Mammary epithelial cell (primary cell): ENCODE measurements at regions of chr5 and their contacts with region 1.

Region 1: DNA sequence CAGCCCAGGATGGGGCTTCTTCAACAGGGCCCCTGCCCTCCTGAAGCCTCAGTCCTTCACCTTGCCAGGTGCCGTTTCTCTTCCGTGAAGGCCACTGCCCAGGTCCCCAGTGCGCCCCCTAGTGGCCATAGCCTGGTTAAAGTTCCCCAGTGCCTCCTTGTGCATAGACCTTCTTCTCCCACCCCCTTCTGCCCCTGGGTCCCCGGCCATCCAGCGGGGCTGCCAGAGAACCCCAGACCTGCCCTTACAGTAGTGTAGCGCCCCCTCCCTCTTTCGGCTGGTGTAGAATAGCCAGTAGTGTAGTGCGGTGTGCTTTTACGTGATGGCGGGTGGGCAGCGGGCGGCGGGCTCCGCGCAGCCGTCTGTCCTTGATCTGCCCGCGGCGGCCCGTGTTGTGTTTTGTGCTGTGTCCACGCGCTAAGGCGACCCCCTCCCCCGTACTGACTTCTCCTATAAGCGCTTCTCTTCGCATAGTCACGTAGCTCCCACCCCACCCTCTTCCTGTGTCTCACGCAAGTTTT is 23.6 kb downstream of the PCDHGC5 start:
- DNase-seq: peak; percentile 50
- H3K4me3 ChIP-seq: peak overlapping the region in 1 of 3 experiments; percentile 32
- H3K27ac ChIP-seq: peak overlapping the region; percentile 82
- H3K4me1 ChIP-seq: peaks cover 66% of the 10 kb centered on the region
- H3K27me3 ChIP-seq: no peaks in the 10 kb centered on the region
- CTCF ChIP-seq: peak; percentile 78 to 90

Region 2: DNA sequence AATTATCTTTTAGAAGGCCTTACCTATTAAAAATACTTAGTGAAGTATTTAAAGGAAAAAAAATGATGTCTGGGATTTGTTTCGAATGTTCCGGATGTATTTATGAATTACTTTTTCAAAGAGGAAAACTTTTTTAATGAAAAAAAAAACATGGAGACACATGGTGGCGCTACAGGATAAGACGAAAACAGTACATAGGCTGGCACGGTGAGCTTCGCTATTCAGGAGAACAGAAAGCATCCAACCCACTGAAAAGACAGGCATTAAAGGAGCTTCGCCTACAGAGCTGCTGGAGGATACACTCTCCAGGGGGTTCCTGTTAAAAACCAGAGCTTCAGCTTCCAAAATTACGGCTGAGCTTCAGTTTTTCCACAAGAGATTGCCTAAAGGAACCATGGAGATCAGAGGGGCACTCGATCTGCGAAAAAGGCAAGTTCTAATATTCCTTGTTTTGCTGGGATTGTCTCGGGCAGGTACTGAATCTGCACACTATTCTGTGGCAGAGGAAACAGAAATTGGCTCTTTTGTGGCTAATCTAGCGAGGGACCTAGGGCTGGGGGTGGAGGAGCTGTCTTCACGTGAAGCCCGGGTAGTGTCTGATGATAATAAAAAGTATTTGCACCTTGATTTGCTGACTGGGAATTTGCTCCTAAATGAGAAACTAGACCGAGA is 289.2 kb before region 1 on chr5 and contains the start of gene PCDHB14:
- CTCF ChIA-PET with region 1: no interaction called
- dilution Hi-C with region 1: no loop called
- in situ Hi-C with region 1: no loop called
- intact Hi-C with region 1: loop called (anchors 1 kb)
- DNase-seq: peak; percentile 65
- H3K4me3 ChIP-seq: peak within 1 kb of the TSS in 2 of 3 experiments; percentile 17 to 32
- H3K27ac ChIP-seq: no peak within 1 kb of the TSS
- H3K4me1 ChIP-seq: no peaks in the 10 kb centered on the region
- H3K27me3 ChIP-seq: no peaks in the 10 kb centered on the region
- CTCF ChIP-seq: peak in 1 of 2 donors; percentile 38
- total RNA-seq, gene PCDHB14: 1.4 to 1.7 TPM

Region 3: DNA sequence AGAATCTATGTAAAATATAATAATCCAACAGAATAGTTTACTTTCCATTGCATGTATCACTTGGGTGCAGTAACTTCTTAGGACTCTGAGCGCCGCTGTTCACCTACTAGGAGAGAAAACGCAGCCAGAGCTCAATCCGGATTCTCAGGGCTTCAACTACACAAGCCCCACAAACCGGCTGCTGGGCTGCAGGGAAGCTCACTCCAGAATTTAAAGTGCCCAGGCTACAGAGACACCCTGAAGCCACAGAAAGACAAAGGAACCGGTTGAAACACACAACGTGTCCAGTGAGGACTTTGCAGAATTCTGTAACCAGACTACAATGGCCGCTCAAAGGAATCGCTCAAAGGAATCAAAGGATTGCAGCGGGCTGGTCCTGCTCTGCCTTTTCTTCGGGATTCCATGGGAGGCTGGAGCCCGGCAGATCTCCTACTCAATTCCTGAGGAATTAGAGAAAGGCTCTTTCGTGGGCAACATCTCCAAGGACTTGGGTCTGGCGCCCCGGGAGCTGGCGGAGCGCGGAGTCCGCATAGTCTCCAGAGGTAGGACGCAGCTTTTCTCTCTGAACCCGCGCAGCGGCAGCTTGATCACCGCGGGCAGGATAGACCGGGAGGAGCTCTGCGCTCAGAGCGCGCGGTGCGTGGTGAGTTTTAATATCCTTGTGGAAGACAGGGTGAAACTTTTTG is 99.5 kb before region 1 on chr5 and contains the start of gene PCDHGA10:
- CTCF ChIA-PET with region 1: no interaction called
- dilution Hi-C with region 1: no loop called
- in situ Hi-C with region 1: no loop called
- intact Hi-C with region 1: loop called (anchors 1 kb)
- DNase-seq: peak; percentile 34
- H3K4me3 ChIP-seq: no peak within 1 kb of the TSS
- H3K27ac ChIP-seq: no peak within 1 kb of the TSS
- H3K4me1 ChIP-seq: no peaks in the 10 kb centered on the region
- H3K27me3 ChIP-seq: no peaks in the 10 kb centered on the region
- CTCF ChIP-seq: no peak
- total RNA-seq, gene PCDHGA10: 7.8 to 7.9 TPM

Region 4: DNA sequence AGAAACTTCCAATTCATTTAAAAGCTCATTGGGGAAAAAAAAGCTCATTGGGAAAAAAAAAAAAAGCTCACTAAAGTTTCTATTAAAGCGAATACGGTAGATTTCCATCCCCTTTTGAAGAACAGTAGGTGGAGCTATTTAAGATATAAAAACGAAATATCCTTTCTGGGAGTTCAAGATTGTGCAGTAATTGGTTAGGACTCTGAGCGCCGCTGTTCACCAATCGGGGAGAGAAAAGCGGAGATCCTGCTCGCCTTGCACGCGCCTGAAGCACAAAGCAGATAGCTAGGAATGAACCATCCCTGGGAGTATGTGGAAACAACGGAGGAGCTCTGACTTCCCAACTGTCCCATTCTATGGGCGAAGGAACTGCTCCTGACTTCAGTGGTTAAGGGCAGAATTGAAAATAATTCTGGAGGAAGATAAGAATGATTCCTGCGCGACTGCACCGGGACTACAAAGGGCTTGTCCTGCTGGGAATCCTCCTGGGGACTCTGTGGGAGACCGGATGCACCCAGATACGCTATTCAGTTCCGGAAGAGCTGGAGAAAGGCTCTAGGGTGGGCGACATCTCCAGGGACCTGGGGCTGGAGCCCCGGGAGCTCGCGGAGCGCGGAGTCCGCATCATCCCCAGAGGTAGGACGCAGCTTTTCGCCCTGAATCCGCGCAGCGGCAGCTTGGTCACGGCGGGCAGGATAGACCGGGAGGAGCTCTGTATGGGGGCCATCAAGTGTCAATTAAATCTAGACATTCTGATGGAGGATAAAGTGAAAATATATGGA is 81.9 kb before region 1 on chr5 and contains the start of gene PCDHGA12:
- CTCF ChIA-PET with region 1: no interaction called
- dilution Hi-C with region 1: loop called (anchors 5 kb)
- in situ Hi-C with region 1: no loop called
- intact Hi-C with region 1: no loop called
- DNase-seq: peak; percentile 82
- H3K4me3 ChIP-seq: peak within 1 kb of the TSS in 2 of 3 experiments; percentile 3 to 17
- H3K27ac ChIP-seq: no peak within 1 kb of the TSS
- H3K4me1 ChIP-seq: no peaks in the 10 kb centered on the region
- H3K27me3 ChIP-seq: no peaks in the 10 kb centered on the region
- CTCF ChIP-seq: peak; percentile 58 to 65
- total RNA-seq, gene PCDHGA12: 3.2 to 24.5 TPM

Region 5: GRCh38 chr5:141475625-141476131 is 36.8 kb before region 1 on chr5 and contains the start of gene PCDHGC3:
- CTCF ChIA-PET with region 1: interaction called, 8 read pairs
- dilution Hi-C with region 1: no loop called
- in situ Hi-C with region 1: no loop called
- intact Hi-C with region 1: loop called (anchors 1 kb)
- DNase-seq: peak; percentile 95
- H3K4me3 ChIP-seq: peak within 1 kb of the TSS; percentile 50 to 73 (median 72)
- H3K27ac ChIP-seq: peak within 1 kb of the TSS; percentile 79
- H3K4me1 ChIP-seq: peaks cover 25% of the 10 kb centered on the region
- H3K27me3 ChIP-seq: no peaks in the 10 kb centered on the region
- CTCF ChIP-seq: peak; percentile 14 to 46
- total RNA-seq, gene PCDHGC3: 74.7 to 76.3 TPM

Region 6: DNA sequence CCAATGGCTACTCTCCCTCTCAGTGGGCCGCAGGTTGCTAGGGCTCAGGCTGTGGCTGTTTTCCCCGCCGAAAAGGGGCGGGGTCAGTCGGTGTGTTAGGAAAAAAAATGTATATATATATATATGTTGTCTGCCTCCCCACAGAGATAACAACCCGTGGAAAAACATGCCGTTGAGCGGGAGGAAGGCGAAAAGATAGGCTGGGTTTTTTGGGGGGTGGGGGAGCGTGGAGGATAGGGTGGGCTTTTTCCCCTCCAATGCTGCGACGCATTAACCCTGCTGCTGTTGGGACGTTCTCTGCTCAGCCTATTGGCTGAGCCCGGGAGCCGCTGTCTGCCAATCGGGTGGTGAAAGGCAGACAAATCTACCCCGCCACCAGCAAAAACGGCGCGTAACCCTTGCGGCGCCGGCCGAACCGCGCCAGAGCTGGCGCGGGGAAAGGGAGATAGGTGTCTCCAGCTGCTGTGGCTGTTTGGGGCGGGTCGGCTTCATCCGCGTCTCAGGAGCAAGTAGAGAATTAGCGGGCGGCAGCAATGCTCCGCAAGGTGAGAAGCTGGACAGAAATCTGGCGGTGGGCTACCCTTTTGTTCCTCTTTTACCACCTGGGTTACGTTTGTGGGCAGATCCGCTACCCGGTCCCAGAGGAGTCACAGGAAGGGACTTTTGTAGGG is 27.7 kb before region 1 on chr5 and contains the start of gene PCDHGC4:
- CTCF ChIA-PET with region 1: no interaction called
- dilution Hi-C with region 1: no loop called
- in situ Hi-C with region 1: no loop called
- intact Hi-C with region 1: loop called (anchors 2 kb)
- DNase-seq: no peak
- H3K4me3 ChIP-seq: peak within 1 kb of the TSS in 1 of 3 experiments; percentile 4
- H3K27ac ChIP-seq: no peak within 1 kb of the TSS
- H3K4me1 ChIP-seq: peaks cover 37% of the 10 kb centered on the region
- H3K27me3 ChIP-seq: no peaks in the 10 kb centered on the region
- CTCF ChIP-seq: no peak
- total RNA-seq, gene PCDHGC4: 1.2 to 2.7 TPM

Region 7: DNA sequence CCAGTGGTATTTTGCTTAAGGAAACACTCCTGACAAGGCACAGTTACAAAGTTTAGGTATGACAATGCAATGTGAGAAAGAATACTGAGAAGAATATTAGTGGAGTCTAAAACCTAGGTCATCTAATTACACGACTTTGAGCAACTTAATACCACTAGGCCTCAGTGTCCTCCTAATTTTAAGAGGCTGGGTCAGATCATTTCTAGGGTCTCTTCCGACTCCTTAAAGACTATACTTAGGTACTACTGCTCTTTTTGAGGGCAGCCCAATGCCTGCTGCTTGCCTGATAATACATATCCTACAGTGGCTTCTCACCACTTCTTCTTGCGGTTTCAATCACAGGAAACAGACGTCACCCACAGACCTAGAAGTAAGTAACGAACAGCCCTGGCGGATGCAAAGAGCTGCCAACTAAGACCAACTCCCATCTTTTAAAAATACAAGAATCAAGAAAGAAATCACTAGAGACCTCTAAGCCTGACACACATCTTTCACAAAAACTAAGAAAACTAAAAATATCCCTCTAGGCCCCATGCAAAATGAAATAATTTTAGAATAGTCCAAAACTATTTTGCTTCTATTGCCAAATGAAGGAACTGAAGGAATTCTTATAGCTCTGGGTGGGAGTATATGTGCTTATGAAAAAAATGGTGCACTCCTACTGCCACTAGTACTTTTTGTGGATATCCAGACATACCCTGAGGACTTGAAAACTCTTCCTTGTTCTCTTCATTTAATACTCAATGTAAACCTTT is 93.2 kb after region 1 on chr5:
- CTCF ChIA-PET with region 1: no interaction called
- dilution Hi-C with region 1: no loop called
- in situ Hi-C with region 1: no loop called
- intact Hi-C with region 1: no loop called
- DNase-seq: no peak
- H3K4me3 ChIP-seq: no peak overlapping the region
- H3K27ac ChIP-seq: peak overlapping the region; percentile 98
- H3K4me1 ChIP-seq: peaks cover 14% of the 10 kb centered on the region
- H3K27me3 ChIP-seq: no peaks in the 10 kb centered on the region
- CTCF ChIP-seq: no peak